AG04449 (cell line): ENCODE measurements at regions of chr2 and their contacts with region 1.

Region 1: GRCh38 chr2:25228848-25229278 is 60.5 kb upstream of the POMC start:
- DNase-seq: no peak
- H3K4me3 ChIP-seq: no peak overlapping the region
- CTCF ChIP-seq: peak; percentile 80

Region 2: DNA sequence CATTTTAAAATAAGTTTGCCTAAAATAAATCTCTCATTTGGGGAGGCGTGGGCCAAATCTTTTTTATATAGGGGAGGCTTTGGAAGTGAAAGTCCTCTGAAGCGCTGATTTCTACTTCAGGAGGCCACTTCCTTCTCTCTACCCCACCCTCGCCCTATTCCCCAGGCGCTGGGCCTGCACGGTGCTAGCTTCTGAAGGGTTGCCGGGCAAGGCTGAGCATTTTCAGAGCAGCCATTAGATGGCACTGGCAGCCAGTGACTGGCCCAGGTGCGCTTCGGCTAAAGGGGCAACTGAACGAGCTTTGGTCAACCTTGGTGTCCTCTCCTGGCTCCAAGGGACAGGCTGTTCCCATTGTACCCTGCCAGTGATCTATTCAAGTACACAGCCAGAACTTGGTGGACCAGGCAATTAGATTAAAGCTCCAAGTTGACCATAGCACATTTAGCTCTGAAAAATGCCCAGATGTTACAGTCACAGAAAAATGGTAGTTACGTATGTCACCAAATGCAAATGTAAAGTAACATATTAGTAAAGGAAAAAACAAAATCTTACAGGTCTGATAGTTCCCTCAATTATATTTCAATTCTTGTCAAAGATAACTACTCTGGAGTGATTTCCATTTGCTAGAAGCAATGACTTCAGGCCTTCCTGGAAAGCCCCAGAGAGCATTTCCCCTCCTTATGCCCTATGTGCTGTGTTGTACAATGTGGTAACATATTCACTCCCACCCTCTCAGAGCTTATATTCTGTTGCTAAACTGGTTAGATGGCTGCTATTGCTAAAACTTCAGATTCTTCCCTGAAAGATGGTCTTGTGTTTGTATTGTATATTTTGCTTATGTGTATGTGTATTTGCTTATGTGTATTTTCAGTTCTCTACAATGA is 62.6 kb before region 1 on chr2:
- CTCF ChIA-PET with region 1: interaction called, 11 read pairs
- POLR2A ChIA-PET with region 1: no interaction called
- DNase-seq: no peak
- H3K4me3 ChIP-seq: no peak overlapping the region
- CTCF ChIP-seq: peak; percentile 20

Region 3: DNA sequence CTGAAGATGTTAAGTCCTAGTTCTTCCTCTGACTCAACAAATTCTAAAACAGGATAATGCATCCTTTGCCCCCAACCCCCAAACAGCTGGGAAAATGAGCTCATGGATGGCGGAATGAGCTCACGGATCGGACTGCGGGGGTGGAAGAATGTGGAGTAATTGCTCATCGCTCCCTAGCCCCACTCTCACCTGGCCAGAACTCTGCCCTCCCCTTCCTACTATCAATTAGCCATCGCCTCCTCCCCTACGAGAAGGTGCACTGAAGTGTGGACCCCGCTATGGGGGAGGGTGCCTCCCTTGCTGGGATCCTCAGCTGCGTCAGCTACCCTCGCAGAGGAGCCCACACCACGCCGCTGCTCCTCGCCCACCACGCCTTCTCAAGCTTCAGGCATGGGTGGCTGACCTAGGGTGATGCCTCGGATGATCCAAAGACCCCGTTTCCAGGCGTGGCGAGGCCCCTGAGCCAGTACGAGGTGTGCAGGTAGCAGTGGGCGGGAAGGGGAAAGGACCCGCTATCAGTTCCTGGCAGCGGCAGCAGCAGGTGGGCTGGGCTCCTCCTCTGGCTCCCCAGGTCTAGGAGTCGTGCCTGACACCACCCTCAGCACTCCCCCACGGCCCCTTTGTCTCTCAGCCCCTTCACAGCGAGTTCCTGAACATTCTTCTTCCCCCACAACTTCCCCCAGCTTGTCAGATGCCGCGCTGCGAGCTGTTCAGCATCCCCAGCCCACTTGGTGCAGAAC is 21.6 kb after region 1 on chr2:
- CTCF ChIA-PET with region 1: interaction called, 19 read pairs
- POLR2A ChIA-PET with region 1: no interaction called
- DNase-seq: no peak
- H3K4me3 ChIP-seq: peak overlapping the region; percentile 20
- CTCF ChIP-seq: no peak